Right ventricle myocardium inferior (tissue), 1 donor: ENCODE measurements at regions of chr1 and their contacts with region 1.

Region 1: GRCh38 chr1:86499987-86500593 is 31.4 kb downstream of the CLCA1 start:
- DNase-seq: no peak
- ATAC-seq: no peak

Region 2: GRCh38 chr1:86380257-86380861 is 119.7 kb before region 1 on chr1:
- intact Hi-C with region 1: loop called (anchors 2 kb)
- DNase-seq: no peak
- ATAC-seq: peak; percentile 65

Region 3: DNA sequence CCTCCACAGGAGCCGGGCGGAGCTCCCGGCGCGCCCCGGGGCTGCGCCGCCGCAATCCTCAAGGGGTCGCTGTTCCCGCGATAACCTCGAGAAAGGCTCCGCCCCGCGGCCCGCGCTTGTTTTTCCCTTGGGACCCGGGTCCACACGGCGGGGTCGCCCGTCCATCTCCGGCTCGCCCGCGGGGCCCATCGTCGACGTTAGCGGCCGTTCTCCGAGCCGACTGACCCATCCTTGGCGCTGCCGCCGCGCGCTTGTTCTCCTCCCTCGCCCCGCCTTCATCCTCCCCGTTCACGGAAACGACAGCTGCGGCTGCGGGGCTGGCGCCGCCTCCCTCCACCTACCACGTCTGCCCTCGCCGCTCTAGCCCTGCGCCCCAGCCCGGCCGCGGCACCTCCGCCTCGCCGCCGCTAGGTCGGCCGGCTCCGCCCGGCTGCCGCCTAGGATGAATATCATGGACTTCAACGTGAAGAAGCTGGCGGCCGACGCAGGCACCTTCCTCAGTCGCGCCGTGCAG is 204.4 kb after region 1 on chr1 and contains the start of gene SH3GLB1:
- intact Hi-C with region 1: loop called (anchors 10 kb)
- DNase-seq: peak; percentile 95
- ATAC-seq: peak; percentile 96
- total RNA-seq, gene SH3GLB1: 132 TPM

Region 4: DNA sequence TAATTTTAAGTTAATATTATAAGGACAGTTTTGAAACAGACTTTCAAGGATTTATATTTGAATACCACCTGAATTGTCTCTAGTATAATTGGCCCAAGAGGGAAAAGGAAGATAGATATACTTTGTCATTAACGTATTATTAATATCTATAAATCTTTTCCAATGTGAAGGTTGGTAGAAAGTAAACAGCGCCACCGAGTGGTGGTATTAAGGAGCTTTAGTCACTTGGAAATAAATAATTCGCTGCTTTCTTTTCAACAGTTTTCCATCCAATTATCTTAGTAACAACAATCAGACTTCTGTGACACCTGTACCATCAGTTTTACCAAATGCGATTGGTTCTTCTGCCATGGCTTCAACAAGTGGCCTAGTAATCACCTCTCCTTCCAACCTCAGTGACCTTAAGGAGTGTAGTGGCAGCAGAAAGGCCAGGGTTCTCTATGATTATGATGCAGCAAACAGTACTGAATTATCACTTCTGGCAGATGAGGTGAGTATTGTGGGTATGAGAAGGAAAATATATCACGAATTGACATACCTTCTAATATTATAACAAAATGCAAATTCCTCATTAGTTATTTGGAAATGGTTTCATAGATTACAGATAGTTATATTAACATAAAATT is 242.0 kb after region 1 on chr1:
- intact Hi-C with region 1: loop called (anchors 10 kb)
- DNase-seq: no peak
- ATAC-seq: no peak